GM18951 (cell line): ENCODE measurements at regions of chr12 and their contacts with region 1.

Region 1: GRCh38 chr12:14845350-14845750 is 2.0 kb upstream of the ART4 start:
- POLR2A ChIP-seq: no peak

Region 2: DNA sequence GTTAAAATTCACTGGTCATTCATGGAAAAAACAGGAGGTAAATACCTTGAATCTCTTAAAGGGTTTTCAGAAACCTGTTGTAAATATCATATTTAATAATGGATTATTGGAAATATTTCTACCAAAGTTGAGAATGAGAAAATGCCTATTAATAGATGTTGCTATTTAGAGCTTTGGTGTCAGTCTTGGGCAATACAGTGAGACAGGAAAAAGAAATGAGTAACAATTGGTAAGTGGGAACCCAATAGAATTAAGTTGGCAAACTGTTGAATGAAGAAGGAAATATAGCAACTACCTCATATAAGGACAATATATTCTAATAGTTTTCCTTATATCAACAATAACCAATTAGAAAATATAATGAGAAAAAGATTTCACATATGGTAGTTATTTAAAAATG is 401.8 kb before region 1 on chr12:
- in situ Hi-C with region 1: no loop called
- POLR2A ChIP-seq: no peak

Region 3: DNA sequence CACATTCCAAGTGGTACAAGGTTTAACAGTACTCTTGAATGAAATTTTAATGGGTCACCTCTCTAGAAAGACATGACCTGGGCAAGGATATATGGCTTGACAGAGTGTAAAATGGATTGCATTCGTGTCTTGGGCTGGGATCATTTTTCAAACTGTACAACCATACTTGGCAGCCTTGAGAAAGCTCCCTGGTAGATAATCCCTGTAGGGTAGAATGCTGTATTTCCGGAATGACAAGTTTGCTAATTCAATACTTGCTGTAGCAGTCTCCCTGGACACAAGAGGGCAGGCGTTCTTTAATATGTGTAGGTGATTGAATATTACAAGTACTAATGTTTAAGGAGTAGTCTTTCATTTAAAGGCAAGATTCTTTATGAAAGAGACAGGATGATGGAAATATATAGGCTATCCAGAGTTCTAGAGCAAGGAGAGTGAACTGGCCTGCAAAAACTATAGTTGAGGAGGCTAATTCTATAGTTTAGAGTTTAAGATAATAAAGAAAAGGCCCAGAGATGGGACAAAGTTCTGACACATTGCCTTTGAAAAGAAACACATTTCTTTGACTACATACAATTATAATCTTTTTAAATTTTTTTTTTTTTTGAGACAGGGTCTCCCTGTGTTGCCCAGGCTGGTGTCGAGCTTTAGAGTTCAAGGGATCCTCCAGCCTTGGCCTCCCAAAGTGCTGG is 331.1 kb before region 1 on chr12:
- in situ Hi-C with region 1: no loop called
- POLR2A ChIP-seq: no peak

Region 4: DNA sequence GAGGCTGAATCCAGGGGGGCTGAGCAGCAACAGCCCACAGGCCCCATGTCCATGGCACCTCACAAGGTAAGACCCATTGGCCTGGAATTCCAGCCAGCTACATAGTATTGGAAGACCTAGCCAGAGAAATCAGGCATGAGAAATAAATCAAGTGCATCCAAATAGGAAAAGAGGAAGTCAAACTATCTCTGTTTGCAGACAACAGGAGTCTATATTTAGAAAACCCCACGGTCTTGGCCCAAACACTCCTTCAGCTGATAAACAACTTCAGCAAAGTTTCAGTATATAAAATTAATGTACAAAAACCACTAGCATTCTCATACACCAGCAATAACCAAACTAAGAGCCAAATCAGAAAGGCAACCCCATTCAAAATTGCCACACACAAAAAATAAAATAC is 144.4 kb after region 1 on chr12:
- in situ Hi-C with region 1: loop called (anchors 5 kb)
- POLR2A ChIP-seq: no peak

Region 5: GRCh38 chr12:15497671-15498292 is 652.4 kb after region 1 on chr12:
- in situ Hi-C with region 1: no loop called
- POLR2A ChIP-seq: no peak